ENCODE measurements at regions of chr19 and their contacts with region 1.

Region 1: DNA sequence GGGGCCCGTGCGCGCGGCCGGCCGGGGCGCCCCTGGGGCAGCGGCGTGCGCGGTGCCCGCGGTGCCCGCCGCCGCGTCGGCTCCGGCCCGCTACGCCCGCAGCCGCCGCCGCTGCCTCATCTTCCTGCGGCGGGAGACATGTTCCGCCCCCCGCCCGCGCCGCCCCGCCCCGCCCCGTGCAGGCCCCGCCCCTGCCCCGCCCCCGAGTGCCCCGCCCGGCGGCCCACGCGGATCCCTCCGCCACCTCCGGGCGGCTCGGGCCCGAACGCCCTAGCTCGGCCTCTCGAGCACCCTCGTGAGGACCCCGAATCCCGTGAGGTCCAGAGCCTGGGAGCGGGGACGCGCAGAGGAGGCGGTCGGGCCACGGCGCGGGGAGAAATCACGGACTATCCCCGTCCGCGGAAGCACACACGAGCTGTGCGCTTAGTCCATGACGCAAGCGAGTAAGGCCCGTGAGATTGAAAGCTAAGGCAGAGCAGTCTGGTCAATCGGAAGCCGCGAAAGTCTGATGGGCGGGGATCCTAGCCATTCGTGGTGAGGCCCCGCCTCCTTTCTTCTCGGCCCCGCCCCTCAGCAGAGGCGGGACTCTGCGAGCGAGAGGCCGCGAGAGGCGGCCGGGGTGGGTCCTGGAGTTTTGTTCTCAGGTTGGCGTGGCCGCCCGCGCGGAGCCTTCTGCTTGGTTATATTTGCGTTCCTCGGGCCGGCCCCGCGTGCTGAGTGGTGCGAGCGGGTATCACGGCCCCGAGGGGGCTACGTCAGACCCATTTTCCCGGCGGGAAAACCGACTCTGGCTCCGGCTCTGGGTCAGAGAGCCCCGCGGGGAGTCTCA is at the start of gene TCF3:
- DNase-seq: peak; percentile 100
- H3K4me3 Mint-ChIP-seq: peak within 1 kb of the TSS; percentile 94
- H3K27ac Mint-ChIP-seq: peak within 1 kb of the TSS; percentile 93
- H3K4me1 Mint-ChIP-seq: peaks cover 17% of the 10 kb centered on the region
- H3K27me3 Mint-ChIP-seq: no peaks in the 10 kb centered on the region
- total RNA-seq, gene TCF3: 147 and 154 TPM in 2 replicates

Region 2: DNA sequence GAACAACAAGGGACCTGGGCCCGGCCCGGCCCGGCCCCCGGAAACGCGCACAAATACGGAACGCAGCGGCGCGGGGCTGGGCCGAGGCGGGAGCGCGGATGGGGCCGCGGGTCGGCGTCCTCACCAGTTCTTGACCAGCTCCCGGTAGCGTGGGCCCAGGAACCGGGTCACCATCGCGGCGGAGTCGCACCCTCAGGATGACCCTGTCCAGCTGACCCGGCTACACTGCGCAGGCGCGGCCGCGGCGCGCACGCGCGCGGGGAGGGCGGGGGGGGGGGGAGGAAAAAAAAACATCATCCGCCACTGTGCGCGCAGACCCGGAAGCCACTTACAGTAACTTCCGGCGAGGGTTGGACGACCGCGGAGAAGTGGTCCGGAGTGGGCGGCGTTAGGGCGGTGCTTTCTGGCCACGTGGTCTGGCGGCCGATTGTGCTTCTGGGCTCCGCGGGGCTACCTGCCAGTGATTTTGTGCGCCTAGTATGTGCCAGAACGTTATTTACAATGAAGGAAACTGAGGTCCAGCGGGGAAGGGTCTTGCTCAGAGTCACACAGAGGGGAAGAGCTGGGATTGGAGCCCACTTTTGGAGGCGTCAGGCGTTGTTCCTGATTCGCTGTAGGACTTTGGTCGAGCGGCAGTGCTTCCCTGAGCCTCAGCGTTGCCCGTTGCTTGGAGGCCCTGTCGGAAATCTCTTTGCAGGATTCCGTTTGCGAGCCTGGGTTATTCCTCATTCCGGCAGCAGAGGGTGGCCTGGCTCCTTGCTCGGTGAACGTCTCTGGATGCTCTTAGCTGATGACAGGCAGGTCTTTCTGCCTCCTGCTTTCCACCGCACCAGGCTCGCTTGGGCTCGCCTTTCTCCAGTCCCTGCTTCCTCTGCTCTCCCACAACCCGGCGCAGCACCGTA is 47.2 kb before region 1 on chr19 and contains the start of gene UQCR11:
- intact Hi-C with region 1: loop called (anchors 1 kb)
- DNase-seq: peak; percentile 98
- H3K4me3 Mint-ChIP-seq: peak within 1 kb of the TSS; percentile 95
- H3K27ac Mint-ChIP-seq: peak within 1 kb of the TSS; percentile 99
- H3K4me1 Mint-ChIP-seq: peaks cover 24% of the 10 kb centered on the region
- H3K27me3 Mint-ChIP-seq: no peaks in the 10 kb centered on the region
- total RNA-seq, gene UQCR11: 194 and 195 TPM in 2 replicates

Region 3: DNA sequence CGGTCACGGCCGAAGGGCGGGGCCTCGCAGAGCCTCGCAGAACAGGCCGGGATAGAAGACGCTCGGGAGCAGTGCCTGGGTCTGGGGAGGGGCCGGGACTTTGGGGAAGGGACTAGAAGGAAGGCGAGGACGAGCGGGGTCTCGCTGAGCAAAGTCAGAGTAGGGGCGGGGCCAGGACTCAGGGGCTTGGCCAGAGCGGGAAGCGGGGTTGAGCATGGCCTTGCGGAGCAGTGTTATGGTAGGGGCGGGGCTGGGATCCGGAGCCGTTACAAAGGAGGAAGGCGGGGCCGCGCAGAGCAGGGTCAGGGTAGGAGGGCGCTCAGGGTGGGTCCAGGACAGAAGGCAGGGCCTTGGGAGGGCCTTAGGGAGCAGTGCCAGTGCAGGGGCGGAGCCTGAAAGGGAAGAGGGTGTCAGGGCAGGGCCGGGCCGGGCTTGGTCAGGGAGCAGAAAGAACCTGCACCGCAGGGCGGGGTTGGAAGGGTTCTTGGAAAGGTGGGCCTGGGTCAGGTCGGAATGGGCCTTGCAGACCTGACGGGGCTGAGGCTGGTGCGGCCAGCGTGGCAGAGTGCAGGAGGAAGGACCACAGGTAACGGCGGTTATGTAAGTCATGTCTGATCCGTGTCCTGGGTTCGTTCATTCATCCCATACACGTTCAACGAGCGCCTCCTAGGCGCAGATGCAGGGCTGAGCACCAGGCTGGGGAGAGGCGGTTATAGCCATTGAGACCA is 159.9 kb after region 1 on chr19:
- intact Hi-C with region 1: loop called (anchors 5 kb)
- DNase-seq: peak; percentile 98
- H3K4me3 Mint-ChIP-seq: peak overlapping the region; percentile 93
- H3K27ac Mint-ChIP-seq: peak overlapping the region; percentile 94
- H3K4me1 Mint-ChIP-seq: peaks cover 13% of the 10 kb centered on the region
- H3K27me3 Mint-ChIP-seq: no peaks in the 10 kb centered on the region

Measured in activated CD4-positive, alpha-beta T cell treated with anti-CD3 and anti-CD28 coated beads, Interleukin-2, amount 10 ng/mL, durations not matched to agents 24 days and 14 days (primary cell).